WTC11 (cell line): ENCODE measurements at regions of chr6 and their contacts with region 1.

Region 1: DNA sequence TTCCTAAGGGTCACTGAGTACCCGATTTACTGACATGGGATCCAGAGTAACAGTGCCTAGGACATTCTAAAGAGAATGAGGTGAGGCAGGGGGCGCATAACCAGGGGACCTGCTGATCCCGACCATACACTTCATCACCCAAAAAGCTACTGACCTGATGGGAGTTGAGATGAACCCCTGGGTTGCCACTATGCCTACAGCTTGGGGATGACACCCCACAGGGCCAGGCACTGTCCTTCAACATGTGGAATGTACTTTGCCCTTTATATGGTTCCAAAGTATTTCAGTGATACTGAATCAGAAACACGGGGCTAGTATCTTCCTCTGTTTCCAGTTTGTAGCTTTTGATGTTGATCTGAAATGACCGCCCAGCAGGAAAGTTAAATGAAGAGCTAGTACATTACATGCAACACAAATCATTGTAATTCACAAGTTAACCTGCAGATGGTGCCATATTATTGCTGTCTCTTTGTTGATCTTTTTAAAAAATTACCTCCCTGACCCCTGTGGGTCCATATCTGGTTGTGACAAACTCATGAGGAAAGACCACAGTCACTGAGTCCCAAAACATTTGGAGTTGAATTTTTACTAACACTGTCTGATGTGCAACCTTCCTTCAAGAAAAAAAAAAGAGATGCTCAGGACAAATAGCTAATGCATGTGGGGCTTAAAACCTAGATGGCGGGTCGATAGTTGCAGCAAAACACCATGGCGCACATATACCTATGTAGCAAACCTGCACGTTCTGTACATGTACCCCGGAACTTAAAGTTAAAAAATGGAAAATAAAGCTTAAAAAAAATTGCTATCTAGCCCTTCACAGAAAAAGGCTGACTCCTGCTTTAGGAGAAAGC is 42.7 kb upstream of the GCNT2 start:
- DNase-seq: no peak
- ATAC-seq: peak; percentile 81
- H3K4me3 Mint-ChIP-seq: no peak overlapping the region
- H3K27ac Mint-ChIP-seq: no peak overlapping the region
- H3K4me1 Mint-ChIP-seq: 0 out of 2 replicates have a peak, but pooled peaks cover 2% of the 10 kb centered on the region
- H3K27me3 Mint-ChIP-seq: no peaks in the 10 kb centered on the region; the same call in 1 of the 2 replicates
- CTCF ChIP-seq: peak; percentile 74

Region 2: DNA sequence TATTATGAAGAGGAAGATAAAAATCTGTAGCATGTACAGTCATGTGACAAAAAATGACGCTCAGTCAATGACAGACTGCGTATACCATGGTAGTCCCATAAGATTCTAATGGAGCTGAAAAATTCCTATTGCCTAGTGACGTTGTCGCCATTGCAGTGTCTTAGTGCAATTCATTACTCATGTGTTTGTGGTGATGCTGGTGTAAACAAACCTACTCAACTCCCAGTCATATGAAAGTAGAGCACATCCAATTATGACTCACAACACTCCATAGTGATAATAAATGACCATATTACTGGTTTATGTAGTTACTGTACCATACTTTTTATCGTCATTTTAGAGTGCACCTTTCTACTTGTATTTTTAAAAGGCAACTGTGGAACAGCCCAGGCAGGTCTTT is 108.5 kb before region 1 on chr6:
- CTCF ChIA-PET with region 1: no interaction called
- POLR2A ChIA-PET with region 1: no interaction called
- DNase-seq: no peak
- ATAC-seq: no peak
- H3K4me3 Mint-ChIP-seq: no peak overlapping the region
- H3K27ac Mint-ChIP-seq: no peak overlapping the region
- H3K4me1 Mint-ChIP-seq: no peaks in the 10 kb centered on the region
- H3K27me3 Mint-ChIP-seq: peaks cover 6% of the 10 kb centered on the region
- CTCF ChIP-seq: no peak

Region 3: DNA sequence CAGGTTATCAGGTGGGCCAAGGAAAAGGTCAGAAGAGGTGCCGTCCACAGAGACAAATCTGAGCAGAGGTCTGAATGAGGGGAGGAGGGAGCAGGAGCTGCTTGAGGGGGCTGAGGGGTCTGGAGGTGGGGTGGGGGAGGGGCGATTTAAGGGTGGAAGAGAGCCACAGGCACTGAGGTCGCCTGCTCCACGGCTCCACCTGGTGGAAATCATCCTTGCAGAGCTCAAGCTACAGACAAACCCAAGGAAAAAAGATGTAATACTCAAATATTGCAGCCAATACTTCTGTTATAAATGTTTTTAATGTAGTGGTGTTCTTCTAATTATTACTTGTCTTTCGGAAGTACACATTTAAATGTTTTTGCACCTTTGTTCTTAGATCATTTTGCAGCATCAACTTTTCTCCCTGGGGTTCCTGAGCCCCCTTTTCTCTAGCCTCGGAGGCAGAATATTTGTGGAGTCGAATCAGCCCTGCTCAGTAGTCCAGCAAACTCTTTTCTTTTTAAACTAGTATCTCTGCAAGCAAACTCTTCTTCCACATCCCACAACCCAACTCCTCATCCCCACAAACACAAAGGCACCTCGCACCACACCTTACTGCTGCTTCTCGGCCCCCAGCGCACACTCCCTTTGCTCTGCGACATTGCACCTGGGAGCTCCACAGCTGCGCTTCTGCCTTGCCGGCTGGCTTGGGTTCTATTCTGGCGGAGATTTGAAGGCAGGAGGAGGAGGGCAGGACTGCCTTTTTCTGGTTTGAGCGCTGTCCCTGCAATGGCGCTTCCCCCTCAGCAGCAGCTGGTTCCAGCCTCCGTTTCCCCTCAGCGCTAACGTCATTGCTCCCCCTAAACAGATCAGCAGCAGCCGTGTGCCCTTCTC is 12.5 kb before region 1 on chr6:
- CTCF ChIA-PET with region 1: interaction called, 35 read pairs
- POLR2A ChIA-PET with region 1: no interaction called
- DNase-seq: peak; percentile 83
- ATAC-seq: peak; percentile 85
- H3K4me3 Mint-ChIP-seq: peak overlapping the region; percentile 19
- H3K27ac Mint-ChIP-seq: no peak overlapping the region
- H3K4me1 Mint-ChIP-seq: peaks cover 15% of the 10 kb centered on the region
- H3K27me3 Mint-ChIP-seq: peaks cover 10% of the 10 kb centered on the region; the same call in 1 of the 2 replicates
- CTCF ChIP-seq: peak; percentile 40; the same call in 1 of the 2 replicates

Region 4: DNA sequence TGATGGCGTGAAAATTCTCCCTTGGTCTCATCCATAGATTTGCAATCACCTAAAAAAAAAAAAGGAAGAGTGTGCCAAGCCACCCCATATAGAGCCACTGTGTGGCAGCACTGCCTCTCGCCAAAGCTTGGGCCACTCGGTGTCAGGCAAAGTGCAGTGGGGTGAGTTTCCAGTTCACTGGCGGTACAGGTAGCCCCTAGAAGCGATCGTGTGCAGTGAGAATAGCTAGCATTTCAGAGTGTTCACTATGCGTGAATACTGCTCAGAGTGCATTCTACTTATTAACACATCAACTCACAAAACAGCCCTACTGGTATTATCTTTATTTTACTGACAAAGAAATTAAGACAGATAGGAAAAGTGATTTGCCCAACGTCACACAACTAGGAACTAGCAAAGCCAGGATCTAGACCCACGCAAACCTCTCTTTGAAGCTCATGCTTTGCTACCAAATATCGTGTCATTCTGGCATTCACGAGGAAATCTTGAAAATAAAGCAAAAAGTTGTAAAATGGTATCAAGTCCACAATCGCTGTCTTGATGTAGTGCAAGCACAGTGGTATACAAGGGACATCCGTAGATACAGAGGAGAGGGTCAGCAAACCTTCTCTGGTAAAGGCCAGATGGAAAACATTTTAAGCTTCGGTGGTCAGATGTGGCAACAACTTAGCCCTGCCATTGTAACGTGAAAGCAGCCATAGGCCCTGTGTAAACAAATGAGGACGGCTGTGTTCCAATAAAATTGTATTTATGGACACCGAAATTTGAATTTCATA is 32.4 kb after region 1 on chr6:
- CTCF ChIA-PET with region 1: interaction called, 13 read pairs
- POLR2A ChIA-PET with region 1: no interaction called
- DNase-seq: peak; percentile 75
- ATAC-seq: peak; percentile 99
- H3K4me3 Mint-ChIP-seq: no peak overlapping the region
- H3K27ac Mint-ChIP-seq: no peak overlapping the region
- H3K4me1 Mint-ChIP-seq: peaks cover 18% of the 10 kb centered on the region
- H3K27me3 Mint-ChIP-seq: no peaks in the 10 kb centered on the region
- CTCF ChIP-seq: 0 out of 2 replicates have a peak, but pooled peaks have one; percentile 31

Region 5: GRCh38 chr6:10694302-10695085 is 216.1 kb after region 1 on chr6 and contains the starts of genes C6orf52 and PAK1IP1:
- CTCF ChIA-PET with region 1: interaction called, 13 read pairs
- POLR2A ChIA-PET with region 1: interaction called, 7 read pairs
- DNase-seq: peak; percentile 88
- ATAC-seq: peak; percentile 96
- H3K4me3 Mint-ChIP-seq: peak within 1 kb of the TSS; percentile 99
- H3K27ac Mint-ChIP-seq: peak within 1 kb of the TSS; percentile 100
- H3K4me1 Mint-ChIP-seq: peaks cover 35% of the 10 kb centered on the region
- H3K27me3 Mint-ChIP-seq: no peaks in the 10 kb centered on the region
- CTCF ChIP-seq: no peak
- total RNA-seq, gene C6orf52: 0.42 to 1.8 TPM (median 0.50 TPM) in 3 replicates
- total RNA-seq, gene PAK1IP1: 24.8 to 30.4 TPM (median 24.9 TPM) in 3 replicates

Region 6: DNA sequence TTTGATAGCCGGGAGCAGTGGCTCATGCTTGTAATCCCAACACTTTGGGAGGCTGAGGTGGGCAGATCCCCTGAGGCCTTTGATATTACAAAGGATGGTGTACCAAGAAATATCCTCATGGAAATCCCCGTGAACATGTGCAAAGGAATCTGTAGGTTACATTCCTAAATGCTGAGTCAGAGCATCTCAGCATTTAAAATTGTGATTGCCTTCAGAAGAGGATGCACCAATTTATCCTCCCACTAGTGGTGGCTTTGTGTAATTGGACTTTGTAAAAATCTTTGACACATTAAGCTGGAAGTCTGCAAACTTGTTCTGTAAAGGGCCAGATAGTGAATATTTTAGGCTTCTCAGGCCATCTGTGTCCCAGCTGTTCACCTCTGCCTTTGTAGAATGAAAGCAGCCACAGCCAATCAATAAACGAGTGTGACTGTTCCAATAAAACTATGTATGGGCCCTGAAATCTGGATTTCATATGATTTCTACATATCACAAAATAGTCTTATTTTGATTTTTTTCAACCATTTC is 281.0 kb after region 1 on chr6:
- CTCF ChIA-PET with region 1: interaction called, 11 read pairs
- POLR2A ChIA-PET with region 1: no interaction called
- DNase-seq: no peak
- ATAC-seq: peak; percentile 78
- H3K4me3 Mint-ChIP-seq: no peak overlapping the region
- H3K27ac Mint-ChIP-seq: peak overlapping the region; percentile 83
- H3K4me1 Mint-ChIP-seq: peaks cover 8% of the 10 kb centered on the region
- H3K27me3 Mint-ChIP-seq: no peaks in the 10 kb centered on the region
- CTCF ChIP-seq: peak; percentile 39; the same call in 1 of the 2 replicates

Region 7: DNA sequence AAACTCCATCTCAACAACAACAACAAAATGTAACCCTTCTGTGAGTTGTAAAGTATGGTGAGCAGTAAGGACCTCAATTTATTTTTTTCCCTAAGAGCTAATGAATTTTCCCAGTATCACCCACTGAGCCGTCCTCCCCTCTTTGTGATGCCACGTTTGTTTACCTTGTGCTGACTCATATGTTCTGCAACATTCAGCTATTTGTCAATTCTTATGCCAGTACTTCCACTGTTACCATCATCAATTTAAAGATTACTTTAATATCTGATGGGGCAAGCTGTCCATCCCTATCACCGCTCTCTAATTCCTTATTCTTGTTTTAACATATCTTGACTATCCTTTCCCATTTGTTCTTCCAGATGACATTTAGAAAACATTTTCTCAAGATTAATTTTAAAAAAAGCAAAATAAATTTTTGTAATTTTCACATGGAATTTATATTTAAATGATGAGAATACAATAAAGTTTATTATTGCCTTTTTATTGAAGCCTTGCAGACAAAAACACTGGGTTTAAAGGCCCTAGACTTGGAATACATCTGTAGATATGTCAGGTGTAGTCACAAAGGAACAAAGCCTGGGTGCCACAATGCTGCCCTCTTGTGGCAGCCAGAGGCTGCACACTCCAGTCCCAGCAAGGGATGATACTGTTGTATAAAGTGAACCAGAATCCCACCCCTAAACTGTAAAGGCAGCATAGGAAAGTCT is 322.6 kb after region 1 on chr6:
- CTCF ChIA-PET with region 1: interaction called, 14 read pairs
- POLR2A ChIA-PET with region 1: interaction called, 3 read pairs
- DNase-seq: peak; percentile 73
- ATAC-seq: peak; percentile 97
- H3K4me3 Mint-ChIP-seq: no peak overlapping the region
- H3K27ac Mint-ChIP-seq: peak overlapping the region; percentile 30
- H3K4me1 Mint-ChIP-seq: peaks cover 11% of the 10 kb centered on the region
- H3K27me3 Mint-ChIP-seq: no peaks in the 10 kb centered on the region
- CTCF ChIP-seq: peak; percentile 96